CD4-positive, alpha-beta memory T cell (primary cell): ENCODE measurements at regions of chr11 and their contacts with region 1.

Region 1: DNA sequence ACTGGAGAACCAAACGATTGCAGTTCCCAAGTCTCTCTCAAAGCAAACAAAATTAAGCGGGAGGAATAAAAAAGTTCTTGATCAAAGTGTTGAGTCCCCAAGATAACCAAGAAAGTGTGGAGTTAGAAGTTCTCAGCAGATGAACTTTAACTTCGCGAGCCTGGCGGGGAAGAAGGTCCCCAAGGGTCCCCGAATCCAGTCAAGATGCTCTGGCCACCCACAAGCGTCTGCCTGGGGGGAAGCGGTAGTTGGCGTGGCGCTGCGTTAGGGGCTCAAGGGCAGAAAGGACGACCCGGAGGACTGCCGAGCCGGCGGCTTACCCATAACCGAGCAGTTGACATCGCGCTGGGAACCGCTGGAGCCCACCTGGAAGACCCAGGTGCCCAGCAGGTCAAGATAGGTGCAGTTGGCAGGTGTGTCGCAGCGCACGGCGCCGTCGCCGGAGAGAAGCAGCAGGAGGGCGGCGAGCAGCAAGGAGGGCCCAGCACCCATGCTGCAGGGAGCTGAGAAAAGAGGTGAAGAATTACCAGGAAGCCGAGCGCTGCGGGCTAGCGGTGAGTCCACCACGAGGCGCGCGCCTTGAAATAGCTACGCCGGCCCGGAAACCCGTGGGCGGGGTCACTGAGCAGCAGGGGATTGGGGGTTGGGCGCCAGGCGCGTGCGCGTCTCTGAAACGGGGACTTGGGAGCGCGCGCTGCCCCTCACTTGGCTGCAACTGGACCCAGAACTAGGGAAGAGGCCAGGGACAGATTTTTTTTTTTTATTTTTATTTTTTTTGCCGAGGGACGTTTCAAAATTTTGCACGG is at the start of gene CTSC:
- DNase-seq: peak; percentile 87 to 91 (median 88)
- H3K4me3 ChIP-seq: peak within 1 kb of the TSS; percentile 85 to 96
- H3K4me3 Mint-ChIP-seq: peak within 1 kb of the TSS; percentile 93 to 100 (median 99)
- H3K27ac ChIP-seq: peak within 1 kb of the TSS; percentile 73
- H3K27ac Mint-ChIP-seq: peak within 1 kb of the TSS; percentile 81 to 99 (median 96)
- H3K4me1 ChIP-seq: peaks cover 56% of the 10 kb centered on the region
- H3K4me1 Mint-ChIP-seq: peaks cover 37 to 74% (median 55%) of the 10 kb centered on the region in 4 donors
- H3K27me3 ChIP-seq: no peaks in the 10 kb centered on the region
- H3K27me3 Mint-ChIP-seq: no peaks in the 10 kb centered on the region
- total RNA-seq, gene CTSC: 57.1 to 60.0 TPM

Region 2: DNA sequence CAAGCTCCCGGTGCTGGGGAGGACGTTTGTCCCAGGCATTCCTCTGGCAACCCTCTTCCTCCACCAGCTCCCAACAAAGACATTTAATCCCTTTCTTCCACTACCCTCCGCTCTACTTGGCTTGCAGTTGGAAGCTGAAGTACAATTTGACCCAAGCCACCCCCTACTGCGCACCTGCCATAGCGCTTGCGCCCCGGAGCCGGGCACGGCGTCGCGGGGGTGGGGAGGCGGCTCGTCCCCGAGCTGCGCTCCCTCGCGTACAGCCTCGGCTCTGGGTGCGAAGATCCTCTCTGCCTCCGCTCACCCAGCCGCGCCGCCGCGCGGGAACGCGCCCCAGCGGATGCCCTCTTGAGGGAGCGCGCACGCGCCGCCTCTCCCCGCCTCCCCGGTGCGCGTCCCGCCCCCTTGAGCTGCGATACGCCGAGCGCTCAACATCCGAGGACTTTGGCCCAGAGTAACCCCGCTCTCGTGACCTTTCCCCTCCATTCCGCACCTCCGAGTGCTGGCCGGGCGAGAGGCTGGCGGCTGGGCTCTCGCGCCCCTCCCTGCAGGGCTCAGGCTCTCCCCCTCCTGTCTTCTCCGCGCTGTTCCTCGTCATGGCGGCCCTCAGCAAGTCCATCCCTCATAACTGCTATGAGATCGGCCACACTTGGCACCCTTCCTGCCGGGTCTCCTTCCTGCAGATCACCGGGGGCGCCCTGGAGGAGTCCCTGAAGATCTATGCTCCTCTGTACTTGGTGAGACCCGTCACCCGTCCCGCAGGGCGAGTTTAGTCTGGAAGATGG is 1299.7 kb before region 1 on chr11 and contains the start of gene TMEM135:
- CTCF ChIA-PET with region 1: no interaction called
- POLR2A ChIA-PET with region 1: no interaction called
- intact Hi-C with region 1: loop called (anchors 5 kb)
- DNase-seq: peak; percentile 89 to 91 (median 90)
- H3K4me3 ChIP-seq: peak within 1 kb of the TSS; percentile 86 to 96
- H3K4me3 Mint-ChIP-seq: peak within 1 kb of the TSS; percentile 94 to 99 (median 96)
- H3K27ac ChIP-seq: peak within 1 kb of the TSS; percentile 57
- H3K27ac Mint-ChIP-seq: peak within 1 kb of the TSS; percentile 79 to 95 (median 94)
- H3K4me1 ChIP-seq: peaks cover 27% of the 10 kb centered on the region
- H3K4me1 Mint-ChIP-seq: peaks cover 28 to 60% (median 42%) of the 10 kb centered on the region in 4 donors
- H3K27me3 ChIP-seq: no peaks in the 10 kb centered on the region
- H3K27me3 Mint-ChIP-seq: no peaks in the 10 kb centered on the region
- total RNA-seq, gene TMEM135: 9.1 to 11.2 TPM

Region 3: DNA sequence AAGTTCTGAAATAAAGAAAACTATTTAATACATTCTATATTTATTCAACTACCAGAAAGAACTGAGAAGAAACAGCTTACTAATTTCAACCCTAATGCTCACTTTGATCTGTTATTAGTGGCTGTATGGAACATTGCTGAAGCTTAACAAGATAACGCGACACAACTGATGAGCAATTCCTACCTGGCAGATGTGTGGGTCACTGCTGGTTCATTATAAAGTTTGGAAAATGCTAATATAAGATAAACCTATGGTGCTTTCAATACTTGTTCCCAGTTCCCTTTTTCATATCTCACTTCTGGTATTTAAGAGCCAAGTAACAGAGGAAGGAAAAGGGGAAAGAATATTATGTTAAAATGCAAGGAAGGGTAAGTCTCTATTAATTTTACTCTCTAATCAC is 10.3 kb before region 1 on chr11:
- CTCF ChIA-PET with region 1: interaction called, 17 read pairs
- POLR2A ChIA-PET with region 1: interaction called, 64 read pairs
- intact Hi-C with region 1: loop called (anchors 1 kb)
- DNase-seq: no peak
- H3K4me3 ChIP-seq: no peak overlapping the region
- H3K4me3 Mint-ChIP-seq: peak overlapping the region in 3 of 8 donors; percentile 38 to 52 (median 44)
- H3K27ac ChIP-seq: no peak overlapping the region
- H3K27ac Mint-ChIP-seq: peak overlapping the region in 4 of 7 donors; percentile 16 to 54 (median 28)
- H3K4me1 ChIP-seq: peaks cover 74% of the 10 kb centered on the region
- H3K4me1 Mint-ChIP-seq: peaks cover 78 to 99% (median 87%) of the 10 kb centered on the region in 4 donors
- H3K27me3 ChIP-seq: no peaks in the 10 kb centered on the region
- H3K27me3 Mint-ChIP-seq: no peaks in the 10 kb centered on the region

Region 4: DNA sequence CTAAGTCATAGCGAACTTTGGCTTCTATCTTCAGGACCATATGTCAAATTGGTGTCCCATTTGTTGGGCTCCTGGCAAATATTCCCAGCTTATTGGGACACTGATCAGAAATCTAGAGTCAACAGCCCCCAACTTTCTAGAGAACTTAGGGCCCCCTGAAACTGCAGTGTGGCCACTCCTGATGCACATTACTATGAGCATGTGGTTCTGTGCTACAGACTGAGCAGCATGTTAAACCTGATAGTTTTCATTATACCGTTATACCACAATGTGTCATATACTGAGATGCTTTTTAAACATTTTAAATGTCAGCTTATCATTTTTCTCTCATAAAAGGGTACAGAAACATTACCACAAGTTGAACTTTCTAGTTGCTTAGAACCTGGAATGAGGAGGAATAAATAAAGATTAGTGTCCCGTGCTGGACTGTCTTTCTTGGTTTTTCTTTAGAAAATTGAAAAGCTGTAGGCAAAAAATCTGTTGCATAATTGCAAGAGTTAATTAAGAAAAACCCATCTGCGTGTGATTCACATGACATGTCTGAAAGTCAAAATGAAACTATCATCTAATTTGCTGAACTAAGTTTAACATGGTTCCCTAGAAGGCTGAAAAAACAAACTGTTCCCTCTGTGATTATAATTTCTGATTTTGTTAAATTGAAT is 16.6 kb after region 1 on chr11:
- CTCF ChIA-PET with region 1: interaction called, 5 read pairs
- POLR2A ChIA-PET with region 1: interaction called, 19 read pairs
- intact Hi-C with region 1: loop called (anchors 2 kb)
- DNase-seq: no peak
- H3K4me3 ChIP-seq: no peak overlapping the region
- H3K4me3 Mint-ChIP-seq: peak overlapping the region in 6 of 8 donors; percentile 6 to 71 (median 52)
- H3K27ac ChIP-seq: no peak overlapping the region
- H3K27ac Mint-ChIP-seq: peak overlapping the region in 3 of 7 donors; percentile 19 to 43 (median 39)
- H3K4me1 ChIP-seq: peaks cover 31% of the 10 kb centered on the region
- H3K4me1 Mint-ChIP-seq: peaks cover 17 to 32% (median 21%) of the 10 kb centered on the region in 4 donors
- H3K27me3 ChIP-seq: no peaks in the 10 kb centered on the region
- H3K27me3 Mint-ChIP-seq: no peaks in the 10 kb centered on the region

Region 5: GRCh38 chr11:88367310-88367709 is 29.9 kb after region 1 on chr11:
- CTCF ChIA-PET with region 1: no interaction called
- POLR2A ChIA-PET with region 1: interaction called, 4 read pairs
- intact Hi-C with region 1: loop called (anchors 2 kb)
- DNase-seq: peak; percentile 32 to 59 (median 43)
- H3K4me3 ChIP-seq: no peak overlapping the region
- H3K4me3 Mint-ChIP-seq: peak overlapping the region in 4 of 8 donors; percentile 9 to 63 (median 38)
- H3K27ac ChIP-seq: no peak overlapping the region
- H3K27ac Mint-ChIP-seq: peak overlapping the region in 3 of 7 donors; percentile 5 to 81 (median 39)
- H3K4me1 ChIP-seq: peaks cover 29% of the 10 kb centered on the region
- H3K4me1 Mint-ChIP-seq: peaks cover 18 to 53% (median 34%) of the 10 kb centered on the region in 4 donors
- H3K27me3 ChIP-seq: no peaks in the 10 kb centered on the region
- H3K27me3 Mint-ChIP-seq: no peaks in the 10 kb centered on the region

Region 6: GRCh38 chr11:88543902-88544655 is 206.7 kb after region 1 on chr11:
- CTCF ChIA-PET with region 1: interaction called, 3 read pairs
- POLR2A ChIA-PET with region 1: no interaction called
- intact Hi-C with region 1: loop called (anchors 5 kb)
- DNase-seq: peak; percentile 56 to 74 (median 72)
- H3K4me3 ChIP-seq: no peak overlapping the region
- H3K4me3 Mint-ChIP-seq: peak overlapping the region in 1 of 8 donors; percentile 68
- H3K27ac ChIP-seq: no peak overlapping the region
- H3K27ac Mint-ChIP-seq: peak overlapping the region in 4 of 7 donors; percentile 2 to 44 (median 17)
- H3K4me1 ChIP-seq: no peaks in the 10 kb centered on the region
- H3K4me1 Mint-ChIP-seq: peaks cover 2 to 5% (median 4%) of the 10 kb centered on the region in 4 donors
- H3K27me3 ChIP-seq: no peaks in the 10 kb centered on the region
- H3K27me3 Mint-ChIP-seq: peaks cover 0 to 3% of the 10 kb centered on the region in 2 donors

Region 7: GRCh38 chr11:90222459-90223247 is 1885.3 kb after region 1 on chr11 and contains the start of gene CHORDC1:
- CTCF ChIA-PET with region 1: no interaction called
- POLR2A ChIA-PET with region 1: no interaction called
- intact Hi-C with region 1: loop called (anchors 10 kb)
- DNase-seq: peak; percentile 88 to 92 (median 89)
- H3K4me3 ChIP-seq: peak within 1 kb of the TSS; percentile 95 to 99
- H3K4me3 Mint-ChIP-seq: peak within 1 kb of the TSS; percentile 96 to 99 (median 98)
- H3K27ac ChIP-seq: peak within 1 kb of the TSS; percentile 88
- H3K27ac Mint-ChIP-seq: peak within 1 kb of the TSS; percentile 88 to 99 (median 97)
- H3K4me1 ChIP-seq: peaks cover 51% of the 10 kb centered on the region
- H3K4me1 Mint-ChIP-seq: peaks cover 44 to 62% (median 52%) of the 10 kb centered on the region in 4 donors
- H3K27me3 ChIP-seq: no peaks in the 10 kb centered on the region
- H3K27me3 Mint-ChIP-seq: no peaks in the 10 kb centered on the region
- total RNA-seq, gene CHORDC1: 70.2 to 78.4 TPM